ENCODE measurements at regions of chr2 and their contacts with region 1.

Region 1: DNA sequence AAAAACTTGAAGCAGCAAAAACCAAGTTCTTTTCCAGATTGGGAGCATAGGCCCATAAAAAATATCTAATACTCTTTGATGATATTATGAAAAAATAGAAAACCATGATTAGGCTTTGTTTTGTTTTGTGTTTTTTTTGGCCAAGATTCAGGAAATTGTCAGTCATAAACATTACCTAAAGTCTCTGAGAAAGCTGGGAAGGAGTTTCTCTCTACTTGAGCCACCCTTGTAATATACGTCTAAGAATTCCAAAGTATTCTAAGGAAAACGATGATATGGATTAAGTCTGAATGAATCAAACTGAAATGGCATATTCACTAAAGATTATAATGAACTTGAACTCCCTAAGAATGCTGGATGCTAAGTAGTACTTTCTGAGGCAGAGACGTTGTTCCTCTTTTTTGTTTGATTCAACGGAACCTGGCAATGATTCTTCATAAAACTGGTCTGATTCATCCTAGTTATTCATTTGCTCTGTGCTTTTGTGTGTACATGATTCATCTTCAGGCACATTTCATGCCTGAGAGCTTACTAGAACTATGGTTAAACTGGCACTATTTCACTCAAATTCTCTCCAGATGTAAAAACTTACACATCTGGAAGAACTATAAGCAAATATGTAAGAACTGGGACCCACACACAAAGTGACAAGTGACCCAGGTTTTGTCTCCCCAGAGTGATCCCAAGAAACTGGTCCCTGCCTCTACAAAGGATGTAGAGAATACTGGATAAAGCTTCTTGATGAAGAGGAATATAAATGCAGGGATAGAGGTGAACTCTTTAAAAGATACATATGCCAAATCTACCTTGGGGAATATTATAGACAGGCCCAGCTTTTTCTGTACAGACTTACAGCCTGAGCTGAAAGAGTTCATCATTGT is 159.7 kb downstream of the DOCK10 start:
- DNase-seq: no peak
- ATAC-seq: no peak
- H3K4me3 ChIP-seq: no peak overlapping the region
- H3K4me3 Mint-ChIP-seq: no peak overlapping the region
- H3K27ac ChIP-seq: no peak overlapping the region
- H3K27ac Mint-ChIP-seq: peak overlapping the region; percentile 70 to 77
- H3K4me1 ChIP-seq: peaks cover 4 to 8% of the 10 kb centered on the region in 2 experiments
- H3K4me1 Mint-ChIP-seq: peaks cover 50 to 54% (median 51%) of the 10 kb centered on the region in 3 donors
- H3K27me3 ChIP-seq: no peaks in the 10 kb centered on the region
- H3K27me3 Mint-ChIP-seq: no peaks in the 10 kb centered on the region

Region 2: GRCh38 chr2:224837558-224837957 is 45.0 kb before region 1 on chr2:
- CTCF ChIA-PET with region 1: interaction called in 1 of 2 experiments, 12 read pairs
- POLR2A ChIA-PET with region 1: no interaction called
- DNase-seq: no peak
- ATAC-seq: no peak
- H3K4me3 ChIP-seq: no peak overlapping the region
- H3K4me3 Mint-ChIP-seq: no peak overlapping the region
- H3K27ac ChIP-seq: no peak overlapping the region
- H3K27ac Mint-ChIP-seq: peak overlapping the region in 1 of 2 donors; percentile 49
- H3K4me1 ChIP-seq: no peaks in the 10 kb centered on the region
- H3K4me1 Mint-ChIP-seq: no peaks in the 10 kb centered on the region
- H3K27me3 ChIP-seq: no peaks in the 10 kb centered on the region
- H3K27me3 Mint-ChIP-seq: no peaks in the 10 kb centered on the region

Region 3: DNA sequence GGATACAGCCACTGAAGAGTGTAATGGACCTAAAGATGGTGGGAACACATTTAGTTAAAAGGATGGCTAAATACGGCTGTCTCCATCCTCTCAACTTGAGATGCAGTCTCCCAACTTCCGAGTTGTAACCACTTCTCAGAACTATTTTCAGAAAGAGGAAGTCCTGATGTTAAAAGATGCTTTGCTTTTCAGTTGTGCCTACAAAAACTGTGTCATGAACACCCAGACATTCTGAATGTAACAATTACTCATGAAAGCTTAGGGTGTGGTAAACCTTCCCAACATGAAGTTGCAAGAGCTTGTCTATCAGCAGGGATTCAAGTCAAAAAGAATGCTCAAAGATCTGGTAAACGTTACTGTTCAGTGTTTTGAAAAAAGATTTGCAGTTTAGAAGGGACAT is 11.8 kb after region 1 on chr2:
- CTCF ChIA-PET with region 1: no interaction called
- POLR2A ChIA-PET with region 1: no interaction called
- DNase-seq: peak in 1 of 35 experiments; percentile 17
- ATAC-seq: peak; percentile 37 to 55 (median 44)
- H3K4me3 ChIP-seq: no peak overlapping the region
- H3K4me3 Mint-ChIP-seq: peak overlapping the region; percentile 7 to 35 (median 9)
- H3K27ac ChIP-seq: peak overlapping the region; percentile 14
- H3K27ac Mint-ChIP-seq: peak overlapping the region; percentile 86 to 87
- H3K4me1 ChIP-seq: peaks cover 6 to 8% of the 10 kb centered on the region in 2 experiments
- H3K4me1 Mint-ChIP-seq: peaks cover 48 to 61% (median 57%) of the 10 kb centered on the region in 3 donors
- H3K27me3 ChIP-seq: no peaks in the 10 kb centered on the region
- H3K27me3 Mint-ChIP-seq: no peaks in the 10 kb centered on the region

Measured in T-cell (primary cell).